K562 (cell line): ENCODE measurements at regions of chr15 and their contacts with region 1.

Region 1: DNA sequence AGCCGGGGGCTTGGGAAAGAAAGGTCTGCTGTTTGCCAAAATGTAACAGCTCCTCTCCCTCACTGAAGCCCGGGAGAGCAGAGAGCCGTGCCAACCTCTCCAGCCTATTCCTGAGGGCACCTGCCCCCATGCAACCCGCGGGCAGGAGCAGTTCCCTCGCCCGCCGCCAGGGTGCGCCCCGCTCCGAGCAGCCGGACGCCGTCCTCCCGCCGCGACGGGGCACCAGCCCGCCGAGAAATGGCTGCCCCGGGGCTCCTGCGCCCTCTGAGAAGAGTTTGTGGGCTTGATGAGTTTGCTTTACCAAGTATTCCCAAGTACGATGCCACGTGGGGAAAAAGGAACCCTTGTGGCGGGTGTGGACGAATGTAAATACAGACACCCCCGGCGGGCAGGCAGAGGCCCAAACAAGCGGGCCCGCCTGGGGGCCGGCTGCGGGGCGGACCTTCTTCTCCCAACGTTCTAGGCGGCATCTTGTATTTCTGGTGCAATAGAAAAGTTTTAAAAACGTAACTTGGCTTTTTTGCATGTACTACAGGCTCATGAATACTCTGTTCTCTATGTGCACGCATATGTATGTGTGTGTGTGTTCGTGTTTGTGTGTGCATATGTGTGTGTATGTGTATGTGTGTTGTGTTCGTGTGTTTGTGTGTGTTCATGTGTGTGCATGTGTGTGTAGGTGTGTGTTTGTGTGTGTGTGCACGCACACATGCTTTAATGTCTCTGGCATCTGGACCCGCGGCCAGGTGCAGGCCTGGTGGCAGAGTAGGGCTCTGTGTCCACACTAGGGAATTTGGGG is 162.9 kb downstream of the CHSY1 start:
- DNase-seq: peak; percentile 70 to 77 (median 74)
- ATAC-seq: peak; percentile 71
- H3K4me3 ChIP-seq: no peak overlapping the region
- H3K27ac ChIP-seq: no peak overlapping the region
- H3K4me1 ChIP-seq: peaks cover 11 to 39% of the 10 kb centered on the region in 2 experiments; a peak in 4 of 5 replicates
- H3K27me3 ChIP-seq: peaks cover 2 to 18% of the 10 kb centered on the region in 2 experiments; a peak in 3 of 5 replicates
- CTCF ChIP-seq: peak; percentile 87 to 96 (median 94)
- EP300 ChIP-seq: no peak
- POLR2A ChIP-seq: no peak
- RAD21 ChIP-seq: peak; percentile 86 to 91

Region 2: GRCh38 chr15:101014921-101015841 is 73.8 kb before region 1 on chr15:
- CTCF ChIA-PET with region 1: no interaction called
- POLR2A ChIA-PET with region 1: no interaction called
- in situ Hi-C with region 1: no loop called
- intact Hi-C with region 1: loop called (anchors 5 kb)
- DNase-seq: peak; percentile 80 to 82 (median 82)
- ATAC-seq: peak; percentile 89
- H3K4me3 ChIP-seq: no peak overlapping the region
- H3K27ac ChIP-seq: no peak overlapping the region
- H3K4me1 ChIP-seq: peaks cover 0 to 11% of the 10 kb centered on the region in 2 experiments; a peak in 3 of 5 replicates
- H3K27me3 ChIP-seq: peaks cover 8 to 30% of the 10 kb centered on the region in 2 experiments; a peak in 4 of 5 replicates
- CTCF ChIP-seq: peak; percentile 87 to 93 (median 92)
- EP300 ChIP-seq: no peak
- POLR2A ChIP-seq: no peak
- RAD21 ChIP-seq: peak; percentile 89 to 94

Region 3: GRCh38 chr15:101148166-101148880 is 59.3 kb after region 1 on chr15:
- CTCF ChIA-PET with region 1: no interaction called
- POLR2A ChIA-PET with region 1: no interaction called
- in situ Hi-C with region 1: no loop called
- intact Hi-C with region 1: loop called (anchors 5 kb)
- DNase-seq: peak in 1 of 4 experiments; percentile 36
- ATAC-seq: peak; percentile 10
- H3K4me3 ChIP-seq: no peak overlapping the region
- H3K27ac ChIP-seq: no peak overlapping the region
- H3K4me1 ChIP-seq: peaks cover 21 to 22% of the 10 kb centered on the region in 2 experiments
- H3K27me3 ChIP-seq: no peaks in the 10 kb centered on the region
- CTCF ChIP-seq: no peak
- EP300 ChIP-seq: no peak
- POLR2A ChIP-seq: no peak
- RAD21 ChIP-seq: no peak

Region 4: DNA sequence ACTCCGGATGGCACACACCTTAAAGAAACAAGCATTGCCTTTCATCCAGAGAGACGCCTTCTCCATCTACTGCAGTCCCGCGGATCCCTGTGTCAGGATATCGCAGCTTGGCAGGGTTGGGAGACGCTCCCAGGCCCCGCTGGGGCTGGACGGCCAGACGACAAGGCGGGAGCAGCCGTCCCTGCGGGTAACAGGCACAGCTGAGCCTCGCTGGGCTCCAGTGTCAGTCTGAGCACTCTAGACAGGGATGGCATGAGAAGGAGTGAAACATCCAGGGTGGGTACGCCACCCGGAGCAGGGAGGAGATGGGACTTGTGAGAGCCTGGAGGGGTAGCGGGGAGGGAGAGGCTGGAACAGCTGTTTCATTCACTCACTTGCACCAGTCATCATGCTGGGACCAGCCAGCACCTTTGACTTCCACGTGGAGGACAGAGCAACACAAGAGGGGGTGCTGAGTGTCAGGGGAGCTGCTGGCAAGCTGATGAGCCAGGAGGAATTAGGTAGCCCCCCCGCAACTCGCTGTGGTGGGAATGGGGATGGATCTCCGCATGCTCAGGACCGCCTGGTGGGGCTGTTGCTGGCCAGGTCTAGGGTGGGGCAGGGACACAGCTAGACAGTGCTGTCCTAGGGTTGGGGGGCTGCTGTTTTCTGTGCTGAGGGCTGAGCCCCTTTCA is 237.6 kb after region 1 on chr15:
- CTCF ChIA-PET with region 1: no interaction called
- POLR2A ChIA-PET with region 1: no interaction called
- in situ Hi-C with region 1: no loop called
- intact Hi-C with region 1: no loop called
- DNase-seq: no peak
- ATAC-seq: peak; percentile 36; the same call in 1 of the 3 replicates
- H3K4me3 ChIP-seq: no peak overlapping the region
- H3K27ac ChIP-seq: no peak overlapping the region
- H3K4me1 ChIP-seq: no peaks in the 10 kb centered on the region
- H3K27me3 ChIP-seq: peaks cover 0 to 15% of the 10 kb centered on the region in 2 experiments; a peak in 2 of 5 replicates
- CTCF ChIP-seq: no peak
- EP300 ChIP-seq: no peak
- POLR2A ChIP-seq: no peak
- RAD21 ChIP-seq: no peak

Region 5: GRCh38 chr15:101600035-101600434 is 511.0 kb after region 1 on chr15:
- CTCF ChIA-PET with region 1: no interaction called
- POLR2A ChIA-PET with region 1: no interaction called
- in situ Hi-C with region 1: no loop called
- intact Hi-C with region 1: no loop called
- DNase-seq: no peak
- ATAC-seq: peak; percentile 66
- H3K4me3 ChIP-seq: no peak overlapping the region
- H3K27ac ChIP-seq: no peak overlapping the region
- H3K4me1 ChIP-seq: no peaks in the 10 kb centered on the region
- H3K27me3 ChIP-seq: peaks cover 7 to 11% of the 10 kb centered on the region in 2 experiments
- CTCF ChIP-seq: no peak
- EP300 ChIP-seq: no peak
- POLR2A ChIP-seq: no peak
- RAD21 ChIP-seq: no peak